ENCODE measurements at regions of chr12 and their contacts with region 1.

Region 1: GRCh38 chr12:96571101-96571862 is 81.9 kb downstream of the CFAP54 start:
- DNase-seq: peak; percentile 58
- H3K4me3 Mint-ChIP-seq: peak overlapping the region; percentile 27
- H3K27ac Mint-ChIP-seq: peak overlapping the region; percentile 15
- H3K4me1 Mint-ChIP-seq: peaks cover 27% of the 10 kb centered on the region
- H3K27me3 Mint-ChIP-seq: peaks cover 7% of the 10 kb centered on the region

Region 2: GRCh38 chr12:96177013-96177412 is 394.3 kb before region 1 on chr12:
- CTCF ChIA-PET with region 1: no interaction called
- intact Hi-C with region 1: loop called (anchors 1 kb)
- DNase-seq: peak; percentile 91
- H3K4me3 Mint-ChIP-seq: no peak overlapping the region
- H3K27ac Mint-ChIP-seq: peak overlapping the region; percentile 82
- H3K4me1 Mint-ChIP-seq: peaks cover 17% of the 10 kb centered on the region
- H3K27me3 Mint-ChIP-seq: no peaks in the 10 kb centered on the region

Region 3: GRCh38 chr12:96427269-96427729 is 144.0 kb before region 1 on chr12:
- CTCF ChIA-PET with region 1: no interaction called
- intact Hi-C with region 1: loop called (anchors 1 kb)
- DNase-seq: peak; percentile 81
- H3K4me3 Mint-ChIP-seq: no peak overlapping the region
- H3K27ac Mint-ChIP-seq: peak overlapping the region; percentile 74
- H3K4me1 Mint-ChIP-seq: peaks cover 42% of the 10 kb centered on the region
- H3K27me3 Mint-ChIP-seq: no peaks in the 10 kb centered on the region

Region 4: DNA sequence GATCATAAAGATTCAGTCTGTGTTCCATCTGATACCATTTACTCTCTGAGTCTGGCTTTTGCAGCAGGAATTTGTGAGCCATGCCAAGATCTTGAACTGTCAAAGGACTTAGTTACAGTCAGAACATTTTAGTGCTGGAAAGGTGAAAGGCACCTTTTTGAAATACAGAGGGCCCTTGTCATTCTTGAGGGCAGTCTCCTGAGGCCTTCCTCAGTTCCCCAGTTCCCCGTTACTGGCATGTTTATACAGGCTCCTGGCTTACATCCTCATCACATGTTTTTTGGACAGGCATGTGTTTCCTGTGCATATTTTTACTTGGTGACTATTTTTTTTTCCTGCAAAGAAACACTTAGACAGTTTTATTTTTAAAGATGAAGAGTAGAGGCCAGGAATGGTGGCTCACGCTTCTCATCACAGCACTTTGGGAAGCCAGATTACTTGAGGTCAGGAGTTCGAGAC is 60.9 kb before region 1 on chr12:
- CTCF ChIA-PET with region 1: no interaction called
- intact Hi-C with region 1: no loop called
- DNase-seq: no peak
- H3K4me3 Mint-ChIP-seq: no peak overlapping the region
- H3K27ac Mint-ChIP-seq: no peak overlapping the region
- H3K4me1 Mint-ChIP-seq: peaks cover 3% of the 10 kb centered on the region
- H3K27me3 Mint-ChIP-seq: no peaks in the 10 kb centered on the region

Region 5: DNA sequence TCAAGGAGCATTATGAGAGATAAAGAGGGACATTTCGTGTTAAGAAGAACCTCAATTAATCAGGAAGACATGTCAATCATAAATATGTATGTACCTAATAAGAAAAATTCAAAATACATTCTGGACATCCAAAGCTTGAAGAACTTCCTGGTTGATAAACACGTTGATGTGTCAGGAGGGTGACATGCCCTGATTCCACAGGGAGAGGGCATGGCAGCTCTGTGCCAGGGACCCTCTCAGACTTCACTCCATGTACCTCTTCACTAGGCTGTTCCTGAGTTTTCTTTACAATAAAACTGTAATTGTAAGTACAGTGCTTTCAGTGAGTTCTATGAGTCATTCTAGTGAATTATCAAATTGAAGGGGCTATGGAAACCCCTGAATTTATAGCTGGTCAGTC is 81.6 kb after region 1 on chr12:
- CTCF ChIA-PET with region 1: no interaction called
- intact Hi-C with region 1: no loop called
- DNase-seq: no peak
- H3K4me3 Mint-ChIP-seq: no peak overlapping the region
- H3K27ac Mint-ChIP-seq: no peak overlapping the region
- H3K4me1 Mint-ChIP-seq: no peaks in the 10 kb centered on the region
- H3K27me3 Mint-ChIP-seq: peaks cover 3% of the 10 kb centered on the region

Region 6: GRCh38 chr12:96729886-96730285 is 158.6 kb after region 1 on chr12:
- CTCF ChIA-PET with region 1: no interaction called
- intact Hi-C with region 1: no loop called
- DNase-seq: no peak
- H3K4me3 Mint-ChIP-seq: no peak overlapping the region
- H3K27ac Mint-ChIP-seq: no peak overlapping the region
- H3K4me1 Mint-ChIP-seq: no peaks in the 10 kb centered on the region
- H3K27me3 Mint-ChIP-seq: no peaks in the 10 kb centered on the region

Measured in activated naive CD4-positive, alpha-beta T cell treated with anti-CD3 and anti-CD28 coated beads for 36 hours (primary cell).